RWPE1 (cell line): ENCODE measurements at regions of chr2 and their contacts with region 1.

Region 1: DNA sequence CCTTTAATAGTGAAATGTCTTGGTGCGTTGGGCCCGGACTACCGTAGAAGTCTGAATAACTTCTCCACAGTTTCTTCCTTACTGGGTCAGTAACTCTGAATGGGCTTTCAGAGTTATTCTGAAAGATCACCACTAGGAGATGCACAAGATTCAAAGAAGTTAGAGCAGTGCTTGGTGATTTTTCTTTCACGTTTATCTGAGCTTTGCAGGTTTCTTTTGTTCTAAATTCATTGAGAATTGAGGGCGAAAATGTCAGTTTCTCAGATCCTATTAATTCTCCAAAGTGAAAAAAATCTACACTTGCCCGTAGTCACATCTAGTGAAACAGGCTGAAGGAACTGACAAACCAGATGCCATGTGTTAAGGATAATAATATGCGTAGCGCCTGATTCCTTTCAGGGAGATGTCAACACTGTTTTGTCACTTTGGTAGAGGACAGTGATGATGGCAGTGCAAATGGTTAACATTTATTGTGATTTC is 70.1 kb downstream of the QPCT start:
- DNase-seq: peak; percentile 63
- H3K27ac ChIP-seq: no peak overlapping the region
- CTCF ChIP-seq: peak; percentile 86

Region 2: DNA sequence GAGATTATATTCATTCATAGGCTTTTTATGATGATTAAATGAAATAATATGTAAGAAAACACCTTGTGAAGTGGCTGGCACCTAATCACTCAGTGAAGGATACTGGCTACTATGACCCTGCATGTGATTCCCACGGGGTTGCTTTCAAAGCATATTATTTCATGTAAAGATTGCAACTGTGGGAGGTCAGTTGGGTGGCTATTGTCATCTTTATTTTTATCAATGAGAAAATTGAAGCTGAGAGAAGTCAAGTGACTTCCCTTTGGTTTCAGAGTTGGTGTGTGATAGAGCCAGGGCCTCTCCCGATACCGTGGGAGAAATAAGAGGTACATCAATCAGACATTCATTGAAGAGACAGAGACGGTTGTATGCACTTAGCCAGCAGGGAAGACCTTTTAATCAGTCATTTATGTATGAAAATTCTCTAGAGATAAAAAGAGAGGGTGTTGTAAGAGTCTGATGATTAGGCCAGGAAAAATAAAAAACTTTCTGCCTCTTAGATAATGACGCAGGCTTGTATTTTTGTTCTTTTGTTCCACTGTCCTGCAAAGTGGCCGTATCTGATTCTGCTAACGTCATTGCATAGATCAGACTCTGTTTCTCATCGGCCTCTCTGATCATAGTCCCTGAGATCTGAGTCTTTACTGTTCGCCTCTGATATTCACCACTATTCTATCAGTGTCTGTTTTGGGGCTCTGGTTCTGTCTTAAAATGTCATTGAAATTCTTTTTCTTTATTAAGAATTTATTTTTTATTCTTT is 19.5 kb before region 1 on chr2:
- CTCF ChIA-PET with region 1: interaction called, 12 read pairs
- POLR2A ChIA-PET with region 1: no interaction called
- DNase-seq: no peak
- H3K27ac ChIP-seq: no peak overlapping the region
- CTCF ChIP-seq: no peak

Region 3: DNA sequence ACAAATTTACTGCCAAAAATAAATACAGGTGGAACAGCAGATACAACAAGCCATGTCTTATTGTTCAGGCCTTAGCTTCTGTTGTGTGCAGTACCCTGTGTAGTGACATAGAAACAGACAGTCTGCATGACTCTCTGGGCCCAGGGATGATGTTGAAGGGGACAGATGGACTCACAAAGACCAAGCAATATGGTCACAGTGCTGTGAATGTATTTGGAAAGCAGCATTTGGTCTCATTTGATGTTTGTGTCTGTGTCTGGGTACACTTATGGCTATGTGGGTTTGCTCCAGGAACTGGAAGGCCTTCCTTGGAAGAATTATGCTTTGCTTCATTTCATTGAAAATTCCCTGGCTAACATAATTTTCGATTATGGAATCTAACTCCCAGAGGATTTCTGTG is 98.5 kb after region 1 on chr2:
- CTCF ChIA-PET with region 1: no interaction called
- POLR2A ChIA-PET with region 1: no interaction called
- DNase-seq: no peak
- H3K27ac ChIP-seq: no peak overlapping the region
- CTCF ChIP-seq: no peak

Region 4: GRCh38 chr2:37573451-37574388 is 159.2 kb after region 1 on chr2:
- CTCF ChIA-PET with region 1: no interaction called
- POLR2A ChIA-PET with region 1: no interaction called
- DNase-seq: no peak
- H3K27ac ChIP-seq: no peak overlapping the region
- CTCF ChIP-seq: no peak

Region 5: DNA sequence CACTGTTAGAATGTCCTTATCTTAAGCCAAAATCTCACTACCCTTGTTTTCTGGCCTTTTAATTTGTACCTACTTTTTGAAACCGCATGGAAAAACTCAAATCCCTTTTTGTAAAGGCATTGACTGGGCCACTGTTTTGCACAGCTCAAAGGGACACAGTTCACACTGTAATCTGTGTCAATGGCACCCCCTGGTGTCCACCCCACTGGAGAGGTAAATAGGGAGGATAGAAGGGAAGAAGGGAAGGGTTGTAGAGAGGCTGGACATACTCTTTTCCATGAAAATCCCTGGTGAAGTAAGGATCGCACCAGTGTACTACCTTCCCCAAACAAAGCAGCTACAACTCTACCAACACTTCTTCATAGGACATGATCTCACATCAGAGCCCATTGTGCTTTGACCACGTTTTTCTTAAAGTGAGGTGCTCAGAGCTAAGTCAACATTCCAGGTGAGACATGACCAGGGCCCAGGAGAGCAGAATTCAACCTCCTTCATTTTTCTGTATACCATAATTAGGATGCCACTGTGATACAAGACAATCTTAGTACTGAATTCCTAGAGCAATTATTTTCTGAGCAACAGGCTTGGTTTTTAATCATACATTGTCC is 418.2 kb after region 1 on chr2:
- CTCF ChIA-PET with region 1: interaction called, 68 read pairs
- POLR2A ChIA-PET with region 1: no interaction called
- DNase-seq: peak; percentile 80
- H3K27ac ChIP-seq: no peak overlapping the region
- CTCF ChIP-seq: peak; percentile 66

Region 6: DNA sequence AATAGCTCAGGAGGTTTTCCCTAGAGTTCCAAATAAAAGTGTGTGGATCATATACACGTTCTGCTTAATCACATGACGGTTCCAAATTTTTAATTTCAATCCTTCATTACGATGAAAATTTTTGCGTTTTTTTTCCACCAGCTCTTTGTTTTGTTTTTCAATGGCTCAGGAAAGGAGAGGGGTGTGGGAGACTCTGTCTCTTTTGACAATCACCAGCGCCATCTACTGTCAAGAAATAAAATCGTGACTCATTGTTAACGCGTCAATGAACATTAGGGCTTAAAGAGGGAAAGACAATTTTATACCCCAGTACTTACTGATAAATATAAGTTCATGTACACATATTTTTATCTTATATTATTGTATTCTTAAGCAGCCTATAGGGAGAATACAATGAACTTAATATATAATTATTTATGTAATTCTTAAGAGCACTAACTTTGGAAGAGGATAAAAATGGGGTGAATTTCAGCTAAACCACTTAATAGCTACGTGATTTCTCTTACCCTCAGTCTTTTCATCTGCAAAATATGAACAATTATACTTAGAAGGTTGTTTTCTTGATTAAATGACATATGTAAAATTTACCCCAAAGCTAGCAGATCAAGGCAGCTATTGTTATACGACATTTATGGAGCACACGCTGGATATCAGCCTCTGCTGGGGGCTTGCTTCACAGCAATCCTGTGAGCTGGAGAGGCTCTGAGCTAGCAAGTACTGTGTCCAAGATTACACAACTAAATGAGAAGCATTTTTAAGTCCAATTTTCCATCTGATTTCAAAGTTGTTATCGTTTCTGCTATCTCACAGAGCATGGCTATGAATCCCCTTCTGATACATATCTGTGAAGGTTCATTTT is 463.2 kb after region 1 on chr2:
- CTCF ChIA-PET with region 1: interaction called, 47 read pairs
- POLR2A ChIA-PET with region 1: interaction called, 3 read pairs
- DNase-seq: peak; percentile 67
- H3K27ac ChIP-seq: no peak overlapping the region
- CTCF ChIP-seq: peak; percentile 74